Lower leg skin (tissue), 4 donors: ENCODE measurements at regions of chr17 and their contacts with region 1.

Region 1: DNA sequence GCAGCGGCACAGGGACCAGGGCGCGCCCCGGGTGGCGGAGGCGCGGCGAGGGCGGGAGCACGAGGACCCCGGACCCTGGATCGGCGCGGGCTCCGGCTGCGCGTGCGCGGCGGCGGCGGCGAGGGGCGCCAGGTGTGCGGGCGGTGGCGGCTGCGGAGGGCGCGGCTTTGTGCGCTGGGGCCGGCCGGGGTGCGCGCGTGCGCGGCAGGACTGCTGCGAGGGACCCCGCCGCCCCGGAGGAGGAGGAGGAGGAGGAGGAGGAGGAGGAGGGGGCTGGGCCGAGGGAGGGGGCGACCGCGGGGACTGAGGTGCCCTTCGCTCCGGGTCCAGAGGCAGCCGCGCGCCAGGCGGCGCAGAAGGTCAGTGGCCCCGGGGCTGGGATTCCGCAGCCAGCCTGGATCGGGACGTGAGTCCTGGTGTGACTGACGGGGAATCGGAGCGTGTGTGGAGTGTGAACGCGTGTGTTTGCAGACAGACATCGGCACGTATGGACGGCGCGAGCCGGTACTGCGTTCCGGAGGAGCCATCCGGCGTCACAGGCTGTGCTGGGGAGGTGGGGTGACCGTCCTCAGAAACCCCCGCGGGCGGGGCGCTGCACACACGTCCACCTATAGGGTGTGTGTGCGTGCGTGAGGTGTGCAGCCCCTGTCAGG is 19.5 kb upstream of the RAP1GAP2 start:
- DNase-seq: no peak
- H3K4me3 ChIP-seq: no peak overlapping the region
- CTCF ChIP-seq: no peak
- POLR2A ChIP-seq: no peak

Region 2: GRCh38 chr17:2916461-2916860 is 139.7 kb after region 1 on chr17:
- intact Hi-C with region 1: no loop called
- DNase-seq: no peak
- H3K4me3 ChIP-seq: no peak overlapping the region
- CTCF ChIP-seq: no peak
- POLR2A ChIP-seq: no peak

Region 3: GRCh38 chr17:3015890-3016289 is 239.2 kb after region 1 on chr17:
- intact Hi-C with region 1: loop called (anchors 5 kb)
- DNase-seq: no peak
- H3K4me3 ChIP-seq: no peak overlapping the region
- CTCF ChIP-seq: no peak
- POLR2A ChIP-seq: no peak